Dorsolateral prefrontal cortex (tissue), 120 donors: ENCODE measurements at regions of chrX and their contacts with region 1.

Region 1: GRCh38 chrX:129905787-129906580 is at the start of gene UTP14A:
- DNase-seq: peak; percentile 71 to 91 (median 86)
- H3K4me3 ChIP-seq: peak within 1 kb of the TSS; percentile 33 to 79 (median 66)
- H3K27ac ChIP-seq: peak within 1 kb of the TSS in 56 of 59 donors; percentile 6 to 90 (median 79)
- H3K27me3 ChIP-seq: peaks cover 0 to 19% (median 0%) of the 10 kb centered on the region in 45 donors
- CTCF ChIP-seq: peak in 6 of 56 donors; percentile 8 to 25 (median 14)
- total RNA-seq, gene UTP14A: 4.0 to 17.6 (median 11.9) TPM

Region 2: DNA sequence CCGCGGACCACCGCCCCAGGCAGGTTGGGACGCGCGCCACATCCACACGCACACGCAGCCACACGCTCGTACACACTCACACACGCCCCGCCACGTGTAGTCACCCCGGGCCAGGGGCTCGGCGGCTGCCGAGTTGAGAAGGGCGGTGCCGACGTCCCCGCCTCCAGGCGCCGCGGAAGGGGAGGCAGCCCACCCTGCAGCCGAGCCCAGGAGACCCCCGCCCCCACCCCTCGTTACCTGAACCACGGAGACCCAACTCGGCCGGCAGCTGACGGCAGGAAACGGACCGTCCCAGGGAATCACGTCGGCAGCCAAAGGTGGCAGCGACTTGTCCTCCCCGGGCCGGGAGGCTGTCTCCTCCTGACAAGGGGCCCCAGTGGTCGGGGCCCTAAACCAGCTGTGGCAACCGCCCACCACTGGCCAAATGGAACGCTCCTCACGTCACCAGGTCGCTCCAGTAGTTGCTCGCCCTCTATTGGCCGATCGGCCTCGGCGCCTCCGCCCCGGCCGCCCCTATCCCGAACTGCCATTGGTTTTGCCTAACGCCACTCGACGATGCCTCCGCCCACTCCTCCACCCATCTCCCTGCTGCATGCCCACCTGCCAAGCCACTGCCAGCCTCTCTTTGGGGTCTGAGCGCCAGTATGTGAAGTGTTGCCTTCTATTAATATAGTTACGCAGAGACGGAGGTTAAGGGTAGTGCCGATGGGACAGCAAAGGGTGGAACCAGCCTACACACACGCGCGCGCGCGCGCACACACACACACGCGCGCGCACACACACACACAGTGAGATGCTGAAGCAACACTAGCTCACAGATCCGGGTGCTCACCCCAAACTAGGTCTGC is 62.3 kb before region 1 on chrX and contains the start of gene ZDHHC9:
- intact Hi-C with region 1: loop called in 1 of 2 experiments (anchors 10 kb)
- DNase-seq: peak; percentile 82 to 94 (median 90)
- H3K4me3 ChIP-seq: peak within 1 kb of the TSS; percentile 34 to 80 (median 69)
- H3K27ac ChIP-seq: peak within 1 kb of the TSS in 55 of 59 donors; percentile 0 to 97 (median 72)
- H3K27me3 ChIP-seq: peaks cover 0 to 34% (median 0%) of the 10 kb centered on the region in 45 donors
- CTCF ChIP-seq: peak in 35 of 56 donors; percentile 10 to 54 (median 31)
- total RNA-seq, gene ZDHHC9: 24.3 to 185 (median 54.5) TPM

Region 3: DNA sequence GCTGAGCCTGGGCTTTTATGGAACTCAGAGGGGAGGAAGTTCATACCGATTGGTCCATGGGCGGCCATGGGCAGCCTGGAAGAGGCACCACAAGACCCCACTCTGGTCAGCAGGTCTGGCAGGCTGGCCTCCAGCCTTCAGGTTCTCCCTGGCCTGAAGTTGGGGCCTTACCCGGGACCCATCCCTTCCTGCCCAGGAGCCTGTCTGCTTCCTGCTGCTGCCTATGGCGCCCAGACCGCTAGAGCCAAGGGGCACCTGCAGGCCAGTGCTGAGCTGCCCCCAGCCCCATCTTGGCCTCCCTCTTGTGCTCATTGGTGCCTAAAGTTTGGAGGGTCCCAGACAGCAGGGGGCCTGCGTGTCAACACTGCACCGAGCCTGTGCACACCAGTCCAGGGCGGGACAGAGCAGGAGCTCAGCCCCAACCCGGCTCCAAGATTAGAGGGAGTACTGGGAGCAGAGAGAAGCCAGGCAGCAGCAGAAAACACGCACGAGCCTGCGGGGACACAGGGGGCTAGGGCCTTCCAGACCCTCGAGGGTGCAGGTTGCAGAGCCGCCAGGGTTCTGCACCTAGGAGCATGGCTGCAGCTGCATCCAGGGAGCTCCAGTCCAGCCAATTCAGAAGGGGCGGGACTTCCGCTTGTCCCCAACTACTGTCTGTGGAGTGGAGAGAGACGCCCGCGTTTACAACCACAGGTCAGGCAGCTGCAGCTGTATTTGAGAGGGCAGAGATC is 393.5 kb after region 1 on chrX:
- intact Hi-C with region 1: no loop called
- DNase-seq: no peak
- H3K4me3 ChIP-seq: no peak overlapping the region
- H3K27ac ChIP-seq: no peak overlapping the region
- H3K27me3 ChIP-seq: peaks cover 0 to 57% (median 12%) of the 10 kb centered on the region in 45 donors
- CTCF ChIP-seq: no peak